GM13977 (cell line): ENCODE measurements at regions of chr7 and their contacts with region 1.

Region 1: GRCh38 chr7:64313740-64314491 is at the start of gene ZNF736:
- DNase-seq: peak; percentile 83
- CTCF ChIP-seq: no peak

Region 2: DNA sequence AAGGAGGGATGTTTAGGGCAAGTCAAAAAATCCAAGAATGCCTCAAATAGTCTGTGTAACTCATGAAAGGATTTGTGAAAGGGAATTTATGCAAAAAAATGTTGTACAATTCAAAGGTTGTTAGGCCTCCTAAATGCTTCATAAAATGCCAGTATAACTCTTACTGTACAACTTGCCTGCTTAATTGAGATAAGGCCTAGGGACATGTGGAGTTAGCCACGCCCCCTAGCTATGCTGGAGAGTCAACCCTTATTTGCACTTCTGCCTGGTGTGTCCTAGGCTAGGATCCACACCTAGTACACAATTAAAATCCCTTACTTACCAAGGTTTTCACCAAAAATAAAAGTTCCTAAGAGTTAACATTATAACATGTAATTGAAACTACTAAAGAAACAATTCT is 171.7 kb after region 1 on chr7:
- in situ Hi-C with region 1: no loop called
- DNase-seq: no peak
- CTCF ChIP-seq: no peak

Region 3: DNA sequence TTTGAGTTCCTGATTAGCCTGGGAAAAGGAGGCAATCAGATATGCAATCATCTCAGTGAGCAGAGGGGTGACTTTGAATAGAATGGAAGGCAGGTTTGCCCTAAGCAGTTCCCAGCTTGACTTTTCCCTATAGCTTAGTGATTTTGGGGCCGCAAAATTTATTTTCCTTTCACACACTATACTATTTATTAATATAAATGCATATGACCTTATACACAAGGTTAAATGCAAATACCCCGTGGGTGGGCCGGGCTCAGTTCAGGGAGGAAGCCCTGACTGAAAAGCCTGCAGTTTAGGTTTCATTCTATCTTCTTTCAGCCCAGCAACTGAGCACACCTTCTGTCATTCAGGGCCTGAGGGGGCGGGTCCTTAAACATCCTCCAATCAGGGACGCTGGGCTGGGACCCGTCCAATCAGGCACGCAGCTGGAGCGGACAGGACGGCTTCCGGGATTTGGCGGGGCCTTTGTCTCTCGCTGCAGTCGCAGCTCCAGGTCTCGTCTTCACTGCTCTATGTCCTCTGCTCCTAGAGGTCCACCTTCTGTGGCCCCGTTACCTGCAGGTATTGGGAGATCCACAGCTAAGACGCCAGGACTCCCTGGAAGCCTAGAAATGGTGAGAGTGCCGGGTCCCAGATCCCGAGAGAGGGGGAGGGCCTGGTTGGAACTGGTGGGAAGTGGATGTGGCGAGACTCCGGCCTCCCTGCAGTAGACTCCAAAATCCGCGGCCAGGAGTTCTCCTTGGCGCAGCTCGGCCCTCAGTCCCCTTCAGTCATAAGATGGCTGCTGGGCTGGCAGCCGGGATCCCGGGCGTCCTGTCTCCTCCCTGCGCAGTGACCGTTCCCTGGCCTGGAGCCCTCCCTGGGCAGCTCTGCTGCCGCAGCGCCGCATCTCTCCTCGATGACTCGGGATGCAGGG is 589.1 kb after region 1 on chr7 and contains the start of gene ZNF273:
- in situ Hi-C with region 1: loop called (anchors 25 kb)
- DNase-seq: peak; percentile 85
- CTCF ChIP-seq: no peak